ENCODE measurements at regions of chr3 and their contacts with region 1.

Region 1: DNA sequence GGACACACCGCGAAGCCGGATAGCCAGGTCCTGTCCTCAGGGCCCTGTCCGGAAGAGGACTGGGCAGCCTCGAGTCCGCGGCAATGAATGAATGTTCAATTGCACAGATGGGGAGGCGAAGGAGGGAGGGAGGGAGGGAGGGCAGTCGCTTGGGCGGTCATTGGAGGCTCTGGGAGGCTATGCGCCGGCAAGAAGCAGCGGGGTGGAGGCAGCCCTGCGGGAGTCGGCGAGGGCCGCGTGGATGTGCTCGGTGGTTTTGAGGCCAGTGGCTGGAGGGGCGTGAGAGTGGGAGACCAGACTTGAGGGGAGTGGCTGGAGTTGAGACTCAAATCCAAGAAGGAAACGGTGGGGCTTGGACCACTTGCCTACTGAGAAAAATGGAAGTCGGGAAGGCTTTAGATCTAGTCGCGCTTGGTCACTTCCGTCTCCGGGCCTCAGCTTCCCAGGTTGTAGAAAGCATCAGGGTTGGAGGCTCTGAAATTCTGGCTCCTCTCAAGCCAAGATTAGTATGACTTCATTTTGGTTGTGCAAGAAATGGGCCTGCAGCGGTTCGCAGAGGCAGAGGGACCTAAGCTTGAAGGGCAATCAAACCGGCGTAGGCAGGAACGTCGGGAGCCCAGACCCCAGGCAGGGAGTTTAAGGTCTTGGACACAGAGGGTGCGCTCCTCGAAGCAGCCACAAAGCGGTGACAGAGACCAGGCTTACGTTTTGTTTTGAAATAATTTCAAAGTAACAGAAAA is 21.1 kb upstream of the PLXND1 start:
- DNase-seq: peak; percentile 22
- H3K4me3 Mint-ChIP-seq: peak overlapping the region; percentile 82
- H3K27ac Mint-ChIP-seq: peak overlapping the region; percentile 76
- H3K4me1 Mint-ChIP-seq: peaks cover 20% of the 10 kb centered on the region
- H3K27me3 Mint-ChIP-seq: peaks cover 16% of the 10 kb centered on the region

Region 2: GRCh38 chr3:128650096-128651050 is 977.2 kb before region 1 on chr3 and contains the start of gene RPN1:
- intact Hi-C with region 1: loop called (anchors 5 kb)
- DNase-seq: peak; percentile 94
- H3K4me3 Mint-ChIP-seq: peak within 1 kb of the TSS; percentile 90
- H3K27ac Mint-ChIP-seq: peak within 1 kb of the TSS; percentile 92
- H3K4me1 Mint-ChIP-seq: peaks cover 26% of the 10 kb centered on the region
- H3K27me3 Mint-ChIP-seq: no peaks in the 10 kb centered on the region
- total RNA-seq, gene RPN1: 190 and 194 TPM in 2 replicates

Region 3: GRCh38 chr3:129824926-129825541 is 197.4 kb after region 1 on chr3:
- intact Hi-C with region 1: loop called (anchors 1 kb)
- DNase-seq: peak; percentile 19
- H3K4me3 Mint-ChIP-seq: no peak overlapping the region
- H3K27ac Mint-ChIP-seq: no peak overlapping the region
- H3K4me1 Mint-ChIP-seq: peaks cover 20% of the 10 kb centered on the region
- H3K27me3 Mint-ChIP-seq: no peaks in the 10 kb centered on the region

Region 4: DNA sequence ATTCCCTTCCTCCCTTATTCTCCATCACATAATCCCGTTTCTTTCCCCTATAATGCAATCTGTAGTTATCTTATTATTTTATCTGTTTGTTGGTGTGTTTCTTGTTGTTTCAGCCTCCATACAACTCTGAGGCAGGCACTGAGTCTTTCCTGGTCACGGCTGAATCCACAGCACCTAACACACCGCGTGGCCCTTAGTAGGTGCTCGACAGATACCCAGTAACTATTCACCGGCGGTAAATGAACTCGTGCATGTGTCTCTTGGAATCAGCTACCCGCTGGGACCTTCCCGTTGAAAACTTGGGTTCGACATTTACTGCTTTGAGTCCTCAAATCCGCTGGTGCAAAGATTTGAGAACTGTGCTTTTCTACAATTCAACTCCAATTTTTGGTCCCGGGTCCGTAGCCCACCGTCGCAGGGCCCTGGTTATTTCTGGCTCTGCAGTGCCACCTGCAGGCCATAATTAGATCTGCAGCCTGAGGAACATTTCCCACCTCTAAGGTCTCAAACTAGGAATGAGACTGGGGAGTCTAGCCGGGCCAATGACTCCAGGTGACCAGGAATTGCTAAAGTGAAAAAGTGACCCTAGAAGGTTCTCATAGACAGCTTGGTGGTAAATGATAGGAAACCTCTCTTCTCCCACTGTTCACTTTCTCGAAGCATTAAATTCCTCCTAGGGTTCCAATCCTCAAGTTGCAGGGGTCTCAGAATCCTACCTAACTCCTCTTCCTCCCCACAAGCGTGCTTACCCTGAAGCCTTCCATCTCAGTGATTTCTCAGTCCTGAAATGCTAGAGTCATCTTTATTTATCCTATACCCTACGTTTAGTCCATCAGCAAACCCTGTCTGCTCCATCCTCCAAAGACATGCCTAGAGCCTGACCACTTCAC is 306.9 kb after region 1 on chr3:
- intact Hi-C with region 1: loop called (anchors 1 kb)
- DNase-seq: peak; percentile 5
- H3K4me3 Mint-ChIP-seq: no peak overlapping the region
- H3K27ac Mint-ChIP-seq: no peak overlapping the region
- H3K4me1 Mint-ChIP-seq: peaks cover 8% of the 10 kb centered on the region
- H3K27me3 Mint-ChIP-seq: peaks cover 9% of the 10 kb centered on the region

Region 5: DNA sequence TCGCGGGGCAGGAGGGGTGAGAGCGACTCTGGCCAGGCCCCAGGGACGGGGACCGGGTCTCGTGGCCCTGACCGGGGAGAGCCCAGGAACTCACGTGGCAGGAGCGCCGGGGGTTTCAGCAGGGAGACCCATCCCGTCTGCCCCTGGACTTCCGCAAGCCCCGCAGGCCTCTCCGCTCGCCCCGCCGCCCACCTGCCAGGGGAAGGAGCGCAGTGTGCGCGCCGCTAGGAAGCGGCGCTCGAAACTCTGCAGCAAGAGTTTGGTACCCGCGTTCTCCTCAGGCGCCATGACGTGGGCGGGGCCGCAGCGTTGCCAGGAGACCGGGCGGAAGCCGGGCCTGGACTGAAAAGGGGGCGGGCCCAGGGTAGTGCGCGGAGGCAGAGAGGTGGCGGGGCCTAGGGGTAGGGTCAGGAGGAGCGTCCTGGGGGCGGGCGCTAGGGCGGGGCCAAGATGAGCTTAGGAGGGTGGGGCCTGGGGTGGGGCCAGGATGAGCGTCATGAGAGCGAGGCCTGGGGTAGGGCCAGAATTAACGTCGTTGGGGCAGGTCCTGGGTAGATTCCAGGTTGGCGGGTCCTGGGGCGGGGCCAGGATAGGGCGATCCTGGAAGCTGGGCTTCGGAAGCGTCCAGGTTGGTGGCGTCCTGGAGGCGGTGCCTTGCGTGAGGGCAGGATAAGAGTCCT is 483.7 kb after region 1 on chr3:
- intact Hi-C with region 1: loop called (anchors 2 kb)
- DNase-seq: peak; percentile 98
- H3K4me3 Mint-ChIP-seq: peak overlapping the region; percentile 96
- H3K27ac Mint-ChIP-seq: peak overlapping the region; percentile 97
- H3K4me1 Mint-ChIP-seq: peaks cover 20% of the 10 kb centered on the region
- H3K27me3 Mint-ChIP-seq: peaks cover 6% of the 10 kb centered on the region